Sciatic nerve (tissue), 2 donors: ENCODE measurements at regions of chr3 and their contacts with region 1.

Region 1: GRCh38 chr3:21259896-21260295 is 491.1 kb downstream of the ZNF385D start:
- DNase-seq: no peak
- ATAC-seq: no peak

Region 2: DNA sequence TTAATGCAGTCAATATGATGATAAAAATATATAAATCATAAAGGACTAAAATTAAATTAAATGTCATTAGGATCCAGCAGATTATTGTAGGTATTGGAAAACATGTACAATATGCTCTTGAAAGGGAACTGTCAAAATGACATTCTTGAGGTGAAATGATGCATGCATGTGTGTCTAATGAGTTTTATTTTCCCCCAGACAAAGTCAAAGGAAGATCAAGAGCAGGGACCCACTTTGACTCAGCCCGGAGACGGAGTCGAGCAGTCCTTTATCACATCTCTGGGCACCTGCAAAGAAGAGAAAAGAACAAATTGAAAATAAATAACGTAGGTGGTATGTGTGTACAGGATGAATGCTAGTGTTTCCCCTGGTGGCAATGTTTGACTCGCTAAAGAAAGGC is 1917.5 kb before region 1 on chr3:
- intact Hi-C with region 1: no loop called
- DNase-seq: no peak
- ATAC-seq: no peak

Region 3: GRCh38 chr3:21297304-21297703 is 37.4 kb after region 1 on chr3:
- intact Hi-C with region 1: loop called (anchors 1 kb)
- DNase-seq: no peak
- ATAC-seq: no peak

Region 4: GRCh38 chr3:21624524-21624923 is 364.6 kb after region 1 on chr3:
- intact Hi-C with region 1: no loop called
- DNase-seq: no peak
- ATAC-seq: no peak